H1 (cell line): ENCODE measurements at regions of chr1 and their contacts with region 1.

Region 1: DNA sequence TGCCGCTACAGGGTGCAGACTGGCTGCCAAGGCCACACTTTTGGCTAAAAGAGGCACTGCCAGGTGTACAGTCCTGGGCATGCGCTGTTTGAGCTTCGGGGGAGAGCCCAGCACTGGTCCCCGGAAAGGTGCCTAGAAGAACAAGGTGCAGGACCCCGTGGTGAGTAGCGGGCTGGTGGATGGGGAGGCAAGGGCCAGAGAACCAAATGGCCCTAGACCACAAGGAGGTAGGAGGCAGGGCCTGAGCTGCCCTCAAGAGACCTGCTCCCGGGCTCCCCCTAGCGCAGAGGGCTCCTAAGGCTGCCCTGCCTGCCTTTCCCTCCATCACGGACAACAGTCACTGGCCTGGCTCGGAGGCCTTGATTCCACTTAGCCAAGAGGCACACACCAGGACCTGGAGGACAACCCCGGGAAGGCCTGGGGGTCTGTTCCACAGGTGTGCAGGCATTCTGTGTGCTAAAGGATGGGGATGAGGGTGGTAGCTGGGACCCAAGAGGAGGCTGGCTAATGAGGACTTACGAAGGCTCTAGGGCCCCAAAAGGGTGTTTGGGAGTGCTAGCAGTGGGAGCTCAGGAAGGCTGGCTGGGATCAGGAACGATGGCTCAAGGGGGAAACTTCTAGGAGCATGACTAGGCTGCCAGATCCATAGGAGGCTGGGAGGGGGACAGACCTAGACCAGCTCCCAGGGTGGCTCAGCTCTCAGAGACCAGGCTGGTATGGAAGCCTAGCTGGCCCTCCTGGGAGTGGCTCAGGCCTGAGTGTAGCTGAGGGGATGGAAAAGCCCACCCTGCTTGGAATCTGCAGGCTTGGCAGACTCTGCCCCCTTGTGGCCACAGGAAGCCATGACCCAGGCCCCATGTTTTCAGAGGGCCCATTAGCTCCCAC is 742 bp downstream of the ARTN start:
- DNase-seq: peak; percentile 67 to 94
- H3K4me3 ChIP-seq: peak overlapping the region; percentile 57 to 67 (median 62)
- H3K27ac ChIP-seq: no peak overlapping the region
- H3K4me1 ChIP-seq: peaks cover 13 to 41% (median 35%) of the 10 kb centered on the region in 4 experiments
- H3K27me3 ChIP-seq: peaks cover 0 to 8% (median 4%) of the 10 kb centered on the region in 4 experiments; a peak in 5 of 7 replicates
- CTCF ChIP-seq: peak in 2 of 3 experiments; percentile 97 to 98; a peak in 3 of 4 replicates
- EP300 ChIP-seq: 0 out of 3 replicates have a peak, but pooled peaks of 1 of the 2 experiments have one; percentile 36
- POLR2A ChIP-seq: no peak
- RAD21 ChIP-seq: peak; percentile 92 to 97

Region 2: DNA sequence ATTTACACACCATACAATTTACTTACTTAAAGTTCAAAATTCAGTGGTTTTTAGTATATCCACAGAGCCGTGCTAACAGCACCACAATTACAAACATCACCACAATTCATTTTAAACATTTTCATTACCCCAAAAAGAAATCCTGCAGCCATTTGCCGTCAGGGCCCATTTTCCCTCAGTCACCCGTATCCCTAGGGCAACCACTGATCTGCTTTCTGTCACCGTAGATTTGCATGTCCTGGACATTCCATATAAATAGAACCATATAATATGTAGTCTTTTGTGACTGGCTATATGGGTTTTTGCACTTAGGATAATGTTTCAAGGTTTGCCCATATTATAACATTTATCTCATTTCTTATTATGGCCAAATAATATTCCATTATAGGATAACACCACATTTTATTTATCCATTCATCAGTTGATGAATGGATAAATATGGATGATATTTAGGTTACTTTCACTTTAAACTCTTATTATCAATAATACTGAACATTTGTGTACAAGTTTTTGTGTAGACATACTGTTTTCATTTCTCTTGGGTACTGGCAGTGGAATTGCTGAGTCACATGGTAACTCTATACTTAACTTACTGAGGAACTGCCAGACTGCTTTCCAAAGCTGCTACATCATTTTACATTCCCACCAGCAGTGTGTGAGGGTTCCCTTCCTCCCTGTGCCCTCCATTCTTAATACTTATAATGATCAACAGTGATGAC is 158.1 kb before region 1 on chr1:
- CTCF ChIA-PET with region 1: interaction called, 618 read pairs
- POLR2A ChIA-PET with region 1: interaction called, 9 read pairs
- DNase-seq: no peak
- H3K4me3 ChIP-seq: no peak overlapping the region
- H3K27ac ChIP-seq: no peak overlapping the region
- H3K4me1 ChIP-seq: peaks cover 0 to 3% (median 0%) of the 10 kb centered on the region in 4 experiments; a peak in 1 of 7 replicates
- H3K27me3 ChIP-seq: no peaks in the 10 kb centered on the region
- CTCF ChIP-seq: no peak
- EP300 ChIP-seq: no peak
- POLR2A ChIP-seq: no peak
- RAD21 ChIP-seq: no peak

Region 3: DNA sequence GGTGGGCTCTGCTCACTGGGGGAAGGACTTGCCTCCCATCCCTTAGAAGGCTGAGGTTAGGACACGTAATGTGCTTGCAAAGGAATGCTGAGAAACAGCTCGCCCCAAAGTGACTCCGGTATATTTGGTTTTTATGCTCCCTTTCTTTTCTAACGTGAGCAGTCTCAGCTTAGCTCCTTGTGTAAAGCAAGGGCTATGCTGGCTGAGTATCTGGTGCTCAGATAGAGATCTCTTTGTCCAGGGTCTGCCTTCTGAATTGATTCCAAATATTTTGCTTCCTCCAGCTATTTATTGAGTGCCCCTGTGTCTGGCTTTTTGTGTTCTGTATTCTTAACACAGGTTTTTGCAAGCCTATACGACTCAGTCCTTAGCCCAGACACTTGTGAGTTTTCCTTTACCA is 95.3 kb before region 1 on chr1:
- CTCF ChIA-PET with region 1: interaction called, 23 read pairs
- POLR2A ChIA-PET with region 1: interaction called, 3 read pairs
- DNase-seq: no peak
- H3K4me3 ChIP-seq: no peak overlapping the region
- H3K27ac ChIP-seq: no peak overlapping the region
- H3K4me1 ChIP-seq: peaks cover 12 to 29% (median 24%) of the 10 kb centered on the region in 4 experiments
- H3K27me3 ChIP-seq: no peaks in the 10 kb centered on the region; a peak in 1 of 7 replicates
- CTCF ChIP-seq: no peak
- EP300 ChIP-seq: no peak
- POLR2A ChIP-seq: no peak
- RAD21 ChIP-seq: no peak

Region 4: DNA sequence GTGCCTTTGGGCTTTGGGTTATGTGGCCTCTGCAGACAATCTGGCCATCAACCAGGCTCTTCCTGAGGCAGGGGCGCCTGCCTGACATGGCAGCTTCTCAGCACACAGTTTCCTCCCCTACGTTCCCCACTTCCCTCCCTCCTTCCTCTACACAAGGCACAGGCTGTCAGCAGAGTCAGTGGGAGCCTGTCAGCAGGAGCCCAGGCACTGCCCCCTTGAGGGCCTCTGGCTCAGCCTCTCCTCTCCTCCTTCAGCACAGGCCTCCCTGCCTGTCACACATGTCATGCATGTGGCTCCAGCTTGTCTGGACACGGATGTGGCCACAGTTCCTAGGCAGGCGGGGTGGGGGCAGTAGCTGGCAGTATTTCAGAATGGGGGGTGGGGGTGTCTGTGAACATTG is 52.9 kb before region 1 on chr1:
- CTCF ChIA-PET with region 1: interaction called, 31 read pairs
- POLR2A ChIA-PET with region 1: no interaction called
- DNase-seq: no peak
- H3K4me3 ChIP-seq: no peak overlapping the region
- H3K27ac ChIP-seq: no peak overlapping the region
- H3K4me1 ChIP-seq: peaks cover 7 to 17% (median 12%) of the 10 kb centered on the region in 4 experiments
- H3K27me3 ChIP-seq: no peaks in the 10 kb centered on the region; a peak in 1 of 7 replicates
- CTCF ChIP-seq: peak; percentile 2 to 40 (median 2); a peak in 2 of 4 replicates
- EP300 ChIP-seq: no peak
- POLR2A ChIP-seq: no peak
- RAD21 ChIP-seq: peak in 1 of 2 experiments; percentile 39; a peak in 2 of 4 replicates

Region 5: GRCh38 chr1:43958351-43959255 is 24.3 kb after region 1 on chr1:
- CTCF ChIA-PET with region 1: interaction called, 20 read pairs
- POLR2A ChIA-PET with region 1: no interaction called
- DNase-seq: no peak
- H3K4me3 ChIP-seq: no peak overlapping the region
- H3K27ac ChIP-seq: no peak overlapping the region
- H3K4me1 ChIP-seq: no peaks in the 10 kb centered on the region
- H3K27me3 ChIP-seq: no peaks in the 10 kb centered on the region
- CTCF ChIP-seq: no peak
- EP300 ChIP-seq: no peak
- POLR2A ChIP-seq: no peak
- RAD21 ChIP-seq: no peak

Region 6: GRCh38 chr1:44044071-44044801 is 109.9 kb after region 1 on chr1:
- CTCF ChIA-PET with region 1: interaction called, 29 read pairs
- POLR2A ChIA-PET with region 1: no interaction called
- DNase-seq: no peak
- H3K4me3 ChIP-seq: no peak overlapping the region
- H3K27ac ChIP-seq: no peak overlapping the region
- H3K4me1 ChIP-seq: peaks cover 0 to 3% (median 2%) of the 10 kb centered on the region in 4 experiments; a peak in 4 of 7 replicates
- H3K27me3 ChIP-seq: peaks cover 0 to 5% (median 0%) of the 10 kb centered on the region in 4 experiments; a peak in 3 of 7 replicates
- CTCF ChIP-seq: no peak
- EP300 ChIP-seq: no peak
- POLR2A ChIP-seq: no peak
- RAD21 ChIP-seq: no peak